ENCODE measurements at regions of chr12 and their contacts with region 1.

Region 1: DNA sequence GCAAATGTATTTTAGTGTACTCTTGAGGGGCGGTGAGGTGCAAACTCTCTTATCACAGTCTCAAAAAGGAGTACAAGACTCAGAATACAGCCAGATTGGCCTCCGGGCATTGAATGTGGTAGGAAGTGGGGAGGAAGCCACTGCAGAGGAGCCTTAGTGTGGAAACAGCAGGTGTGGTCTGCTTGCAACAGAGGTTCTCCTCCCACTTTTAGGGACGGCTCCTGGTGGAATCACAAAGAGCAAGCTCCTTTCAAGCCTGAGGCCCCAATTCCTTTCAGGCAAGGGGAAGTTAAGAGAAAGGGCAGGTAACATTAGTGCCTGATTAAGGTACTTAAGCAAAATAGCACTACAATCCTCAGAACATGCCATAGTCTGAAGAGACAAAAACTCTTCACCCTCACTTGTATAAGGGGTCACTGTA is 23.7 kb upstream of the SLC2A3 start:
- DNase-seq: peak; percentile 67
- ATAC-seq: no peak
- H3K4me3 ChIP-seq: peak overlapping the region; percentile 63 to 91 (median 71)
- H3K4me3 Mint-ChIP-seq: peak overlapping the region; percentile 91
- H3K27ac ChIP-seq: peak overlapping the region; percentile 91 to 94
- H3K27ac Mint-ChIP-seq: peak overlapping the region; percentile 94
- H3K4me1 ChIP-seq: peaks cover 25 to 34% of the 10 kb centered on the region in 2 donors
- H3K4me1 Mint-ChIP-seq: peaks cover 36% of the 10 kb centered on the region
- H3K27me3 ChIP-seq: no peaks in the 10 kb centered on the region
- H3K27me3 Mint-ChIP-seq: no peaks in the 10 kb centered on the region
- CTCF ChIP-seq: no peak

Region 2: DNA sequence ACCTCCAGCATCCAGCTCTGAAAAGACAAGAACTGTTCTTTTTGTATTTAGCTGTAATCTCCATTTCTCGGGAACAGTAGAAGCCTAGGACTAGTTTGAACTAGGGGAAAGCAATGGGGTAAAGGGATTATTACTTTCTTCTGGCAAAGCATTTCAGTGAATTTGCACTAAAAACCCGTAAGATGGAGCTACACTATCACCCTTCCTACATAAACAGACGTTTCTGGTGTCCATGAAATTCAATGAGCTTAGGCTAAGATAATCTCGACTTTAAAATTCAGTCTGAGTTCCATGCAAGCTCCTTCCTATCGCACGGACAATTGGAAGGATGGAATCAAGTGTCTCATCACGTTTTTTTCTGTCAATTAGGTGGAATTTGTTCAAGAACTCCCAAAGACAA is 631.8 kb before region 1 on chr12:
- CTCF ChIA-PET with region 1: no interaction called
- POLR2A ChIA-PET with region 1: no interaction called
- intact Hi-C with region 1: no loop called
- DNase-seq: no peak
- ATAC-seq: no peak
- H3K4me3 ChIP-seq: no peak overlapping the region
- H3K4me3 Mint-ChIP-seq: no peak overlapping the region
- H3K27ac ChIP-seq: no peak overlapping the region
- H3K27ac Mint-ChIP-seq: no peak overlapping the region
- H3K4me1 ChIP-seq: no peaks in the 10 kb centered on the region
- H3K4me1 Mint-ChIP-seq: no peaks in the 10 kb centered on the region
- H3K27me3 ChIP-seq: peaks cover 0 to 4% (median 2%) of the 10 kb centered on the region in 4 experiments
- H3K27me3 Mint-ChIP-seq: peaks cover 18% of the 10 kb centered on the region
- CTCF ChIP-seq: no peak

Region 3: DNA sequence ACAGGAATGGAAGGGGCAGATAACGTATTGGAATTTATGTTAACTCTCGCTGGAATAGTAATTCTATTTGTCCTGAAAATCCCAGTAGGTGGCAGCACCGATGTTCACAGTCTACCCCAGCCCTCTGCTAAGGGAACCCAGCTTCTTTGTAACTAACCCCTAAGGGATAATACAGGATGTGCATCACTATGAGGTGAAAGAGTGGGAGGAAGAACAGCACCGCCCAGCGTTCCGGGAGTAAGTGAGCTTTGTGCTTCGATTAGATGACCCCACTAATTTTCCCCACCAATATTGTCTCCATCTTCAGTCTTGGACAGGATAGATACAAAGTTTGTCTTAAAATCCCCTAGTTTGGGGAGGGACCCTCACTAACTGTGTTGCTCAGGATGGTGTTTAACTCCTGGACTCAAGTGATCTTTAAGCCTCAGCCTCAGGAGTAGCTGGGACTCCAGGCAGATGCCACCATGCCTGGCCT is 26.4 kb before region 1 on chr12:
- CTCF ChIA-PET with region 1: interaction called, 221 read pairs
- POLR2A ChIA-PET with region 1: interaction called, 49 read pairs
- intact Hi-C with region 1: loop called (anchors 1 kb)
- DNase-seq: peak; percentile 95
- ATAC-seq: peak; percentile 80
- H3K4me3 ChIP-seq: peak overlapping the region; percentile 66 to 100 (median 81)
- H3K4me3 Mint-ChIP-seq: no peak overlapping the region
- H3K27ac ChIP-seq: peak overlapping the region; percentile 82 to 90
- H3K27ac Mint-ChIP-seq: no peak overlapping the region
- H3K4me1 ChIP-seq: peaks cover 23 to 41% of the 10 kb centered on the region in 2 donors
- H3K4me1 Mint-ChIP-seq: peaks cover 4% of the 10 kb centered on the region
- H3K27me3 ChIP-seq: no peaks in the 10 kb centered on the region
- H3K27me3 Mint-ChIP-seq: no peaks in the 10 kb centered on the region
- CTCF ChIP-seq: peak; percentile 78

Region 4: DNA sequence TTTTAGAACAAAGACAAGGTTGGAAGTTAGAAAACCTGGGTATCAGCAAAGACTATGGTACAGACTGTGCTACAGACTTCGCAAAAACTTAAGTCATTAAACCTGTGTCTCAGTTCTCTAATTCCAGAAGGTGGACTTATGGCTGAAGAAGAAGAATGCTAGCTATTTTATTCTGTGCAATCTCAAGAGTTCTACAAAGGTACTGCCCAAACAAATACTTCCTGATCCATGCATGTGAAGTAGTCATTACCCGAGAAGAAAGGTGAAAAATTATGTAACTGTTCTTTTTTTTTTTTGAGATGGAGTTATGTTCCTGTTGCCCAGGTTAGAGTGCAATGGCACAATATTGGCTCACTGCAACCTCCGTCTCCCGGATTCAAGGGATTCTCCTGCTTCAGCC is 21.7 kb after region 1 on chr12:
- CTCF ChIA-PET with region 1: interaction called, 15 read pairs
- POLR2A ChIA-PET with region 1: interaction called, 3 read pairs
- intact Hi-C with region 1: loop called (anchors 1 kb)
- DNase-seq: no peak
- ATAC-seq: no peak
- H3K4me3 ChIP-seq: no peak overlapping the region
- H3K4me3 Mint-ChIP-seq: no peak overlapping the region
- H3K27ac ChIP-seq: no peak overlapping the region
- H3K27ac Mint-ChIP-seq: no peak overlapping the region
- H3K4me1 ChIP-seq: peaks cover 14 to 19% of the 10 kb centered on the region in 2 donors
- H3K4me1 Mint-ChIP-seq: peaks cover 16% of the 10 kb centered on the region
- H3K27me3 ChIP-seq: no peaks in the 10 kb centered on the region
- H3K27me3 Mint-ChIP-seq: no peaks in the 10 kb centered on the region
- CTCF ChIP-seq: no peak

Region 5: GRCh38 chr12:8026291-8026900 is 66.7 kb after region 1 on chr12:
- CTCF ChIA-PET with region 1: interaction called, 9 read pairs
- POLR2A ChIA-PET with region 1: interaction called, 6 read pairs
- intact Hi-C with region 1: loop called (anchors 1 kb)
- DNase-seq: peak; percentile 98
- ATAC-seq: peak; percentile 95
- H3K4me3 ChIP-seq: peak overlapping the region; percentile 92 to 99 (median 98)
- H3K4me3 Mint-ChIP-seq: peak overlapping the region; percentile 97
- H3K27ac ChIP-seq: peak overlapping the region; percentile 99 to 100
- H3K27ac Mint-ChIP-seq: peak overlapping the region; percentile 100
- H3K4me1 ChIP-seq: peaks cover 4 to 8% of the 10 kb centered on the region in 2 donors
- H3K4me1 Mint-ChIP-seq: peaks cover 11% of the 10 kb centered on the region
- H3K27me3 ChIP-seq: no peaks in the 10 kb centered on the region
- H3K27me3 Mint-ChIP-seq: no peaks in the 10 kb centered on the region
- CTCF ChIP-seq: no peak

Region 6: GRCh38 chr12:8078398-8078797 is 118.7 kb after region 1 on chr12:
- CTCF ChIA-PET with region 1: interaction called, 4 read pairs
- POLR2A ChIA-PET with region 1: interaction called, 4 read pairs
- intact Hi-C with region 1: loop called (anchors 1 kb)
- DNase-seq: peak; percentile 56
- ATAC-seq: no peak
- H3K4me3 ChIP-seq: no peak overlapping the region
- H3K4me3 Mint-ChIP-seq: no peak overlapping the region
- H3K27ac ChIP-seq: no peak overlapping the region
- H3K27ac Mint-ChIP-seq: no peak overlapping the region
- H3K4me1 ChIP-seq: peaks cover 23 to 24% of the 10 kb centered on the region in 2 donors
- H3K4me1 Mint-ChIP-seq: peaks cover 38% of the 10 kb centered on the region
- H3K27me3 ChIP-seq: no peaks in the 10 kb centered on the region
- H3K27me3 Mint-ChIP-seq: no peaks in the 10 kb centered on the region
- CTCF ChIP-seq: peak; percentile 61